ENCODE measurements at regions of chr11 and their contacts with region 1.

Region 1: GRCh38 chr11:15835788-15836411 is 520.4 kb downstream of the SOX6 start:
- DNase-seq: no peak
- ATAC-seq: no peak

Region 2: GRCh38 chr11:16613512-16614381 is 777.8 kb after region 1 on chr11:
- intact Hi-C with region 1: loop called (anchors 10 kb)
- DNase-seq: peak; percentile 94
- ATAC-seq: peak; percentile 98

Measured in Right ventricle myocardium superior (tissue), 1 donor.